Common myeloid progenitor, CD34-positive (primary cell): ENCODE measurements at regions of chr9 and their contacts with region 1.

Region 1: GRCh38 chr9:7385746-7386145 is 413.8 kb downstream of the DMAC1 start:
- DNase-seq: no peak
- H3K4me3 ChIP-seq: no peak overlapping the region
- H3K27ac ChIP-seq: no peak overlapping the region
- H3K4me1 ChIP-seq: no peaks in the 10 kb centered on the region
- H3K27me3 ChIP-seq: no peaks in the 10 kb centered on the region

Region 2: DNA sequence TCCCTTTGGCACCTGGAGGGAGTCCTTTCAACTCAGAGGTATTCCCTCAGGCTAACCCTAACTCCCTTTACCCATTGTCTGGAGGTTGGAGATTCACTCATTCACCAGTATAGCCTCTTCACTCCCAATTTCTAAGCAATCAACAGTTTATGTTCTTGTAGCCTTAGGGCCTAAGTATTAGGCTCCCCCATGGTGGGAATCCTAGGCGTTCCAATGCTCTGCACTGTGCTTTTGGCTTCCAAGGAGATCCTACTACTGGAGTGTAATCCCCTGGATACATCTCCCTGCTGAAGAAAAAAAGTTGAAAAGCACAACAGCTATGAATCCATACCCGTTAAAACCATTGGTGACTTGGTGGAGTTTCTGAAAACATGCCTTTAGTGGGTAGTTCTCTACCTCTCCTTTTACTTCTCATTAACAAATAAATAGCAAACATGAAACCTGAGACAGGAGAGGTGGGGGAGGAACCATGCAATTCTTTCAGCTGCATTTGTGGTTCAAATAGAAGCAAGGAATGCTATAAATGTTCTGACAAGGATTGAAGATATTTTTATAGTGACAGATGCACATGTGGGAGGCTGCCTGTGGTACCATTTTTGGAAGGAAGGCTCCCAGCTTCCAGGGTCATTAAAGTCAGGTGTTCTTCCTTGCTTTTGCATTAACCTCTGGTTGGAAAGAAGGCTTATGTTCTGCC is 16.7 kb after region 1 on chr9:
- CTCF ChIA-PET with region 1: interaction called, 12 read pairs
- POLR2A ChIA-PET with region 1: interaction called, 6 read pairs
- DNase-seq: no peak
- H3K4me3 ChIP-seq: no peak overlapping the region
- H3K27ac ChIP-seq: no peak overlapping the region
- H3K4me1 ChIP-seq: peaks cover 0 to 8% (median 1%) of the 10 kb centered on the region in 4 experiments
- H3K27me3 ChIP-seq: no peaks in the 10 kb centered on the region